ENCODE measurements at regions of chr4 and their contacts with region 1.

Region 1: GRCh38 chr4:42656944-42657792 is at the start of gene ATP8A1:
- DNase-seq: peak; percentile 95 to 96
- ATAC-seq: peak; percentile 92 to 97 (median 94)
- H3K4me3 ChIP-seq: peak within 1 kb of the TSS; percentile 88
- H3K27ac ChIP-seq: peak within 1 kb of the TSS; percentile 91
- H3K4me1 ChIP-seq: peaks cover 46% of the 10 kb centered on the region
- H3K27me3 ChIP-seq: no peaks in the 10 kb centered on the region
- CTCF ChIP-seq: peak; percentile 26
- total RNA-seq, gene ATP8A1: 13.8 to 26.5 (median 18.2) TPM

Region 2: GRCh38 chr4:42605264-42605663 is 51.9 kb before region 1 on chr4:
- intact Hi-C with region 1: loop called (anchors 1 to 5 kb)
- DNase-seq: no peak
- ATAC-seq: peak; percentile 94 to 98 (median 96)
- H3K4me3 ChIP-seq: peak overlapping the region; percentile 23
- H3K27ac ChIP-seq: peak overlapping the region; percentile 74
- H3K4me1 ChIP-seq: peaks cover 39% of the 10 kb centered on the region
- H3K27me3 ChIP-seq: no peaks in the 10 kb centered on the region
- CTCF ChIP-seq: no peak

Region 3: GRCh38 chr4:42610941-42611340 is 46.2 kb before region 1 on chr4:
- intact Hi-C with region 1: loop called in 1 of 2 experiments (anchors 5 kb)
- DNase-seq: no peak
- ATAC-seq: no peak
- H3K4me3 ChIP-seq: no peak overlapping the region
- H3K27ac ChIP-seq: no peak overlapping the region
- H3K4me1 ChIP-seq: peaks cover 32% of the 10 kb centered on the region
- H3K27me3 ChIP-seq: no peaks in the 10 kb centered on the region
- CTCF ChIP-seq: no peak

Region 4: GRCh38 chr4:42732776-42733175 is 75.6 kb after region 1 on chr4:
- intact Hi-C with region 1: no loop called
- DNase-seq: no peak
- ATAC-seq: no peak
- H3K4me3 ChIP-seq: no peak overlapping the region
- H3K27ac ChIP-seq: no peak overlapping the region
- H3K4me1 ChIP-seq: no peaks in the 10 kb centered on the region
- H3K27me3 ChIP-seq: no peaks in the 10 kb centered on the region
- CTCF ChIP-seq: no peak

Measured in psoas muscle (tissue), 8 donors.